ENCODE measurements at regions of chr3 and their contacts with region 1.

Region 1: GRCh38 chr3:30934208-30934550 is 39.7 kb upstream of the GADL1 start:
- DNase-seq: peak; percentile 18
- H3K4me3 ChIP-seq: no peak overlapping the region
- H3K27ac ChIP-seq: no peak overlapping the region
- H3K27me3 ChIP-seq: no peaks in the 10 kb centered on the region
- CTCF ChIP-seq: peak; percentile 70

Region 2: GRCh38 chr3:31132132-31132769 is 198.1 kb after region 1 on chr3:
- CTCF ChIA-PET with region 1: interaction called, 14 read pairs
- POLR2A ChIA-PET with region 1: no interaction called
- DNase-seq: peak; percentile 2
- H3K4me3 ChIP-seq: no peak overlapping the region
- H3K27ac ChIP-seq: no peak overlapping the region
- H3K27me3 ChIP-seq: no peaks in the 10 kb centered on the region
- CTCF ChIP-seq: peak; percentile 62

Region 3: GRCh38 chr3:31531992-31532586 is 597.9 kb after region 1 on chr3:
- CTCF ChIA-PET with region 1: interaction called, 11 read pairs
- POLR2A ChIA-PET with region 1: no interaction called
- DNase-seq: peak; percentile 98
- H3K4me3 ChIP-seq: peak overlapping the region; percentile 84
- H3K27ac ChIP-seq: peak overlapping the region; percentile 99
- H3K27me3 ChIP-seq: no peaks in the 10 kb centered on the region
- CTCF ChIP-seq: no peak